Esophagus muscularis mucosa (tissue), 4 donors: ENCODE measurements at regions of chr1 and their contacts with region 1.

Region 1: GRCh38 chr1:237386362-237387143 is 344.6 kb downstream of the RYR2 start:
- DNase-seq: no peak
- H3K4me3 ChIP-seq: no peak overlapping the region
- H3K27ac ChIP-seq: peak overlapping the region in 1 of 4 donors; percentile 1
- H3K4me1 ChIP-seq: peaks cover 8 to 23% (median 19%) of the 10 kb centered on the region in 4 donors
- H3K27me3 ChIP-seq: no peaks in the 10 kb centered on the region
- CTCF ChIP-seq: peak; percentile 75 to 77 (median 76)
- EP300 ChIP-seq: no peak
- POLR2A ChIP-seq: no peak

Region 2: GRCh38 chr1:237041795-237042525 is 344.6 kb before region 1 on chr1 and contains the start of gene RYR2:
- intact Hi-C with region 1: loop called (anchors 10 kb)
- DNase-seq: no peak
- H3K4me3 ChIP-seq: peak within 1 kb of the TSS; percentile 79 to 82 (median 80)
- H3K27ac ChIP-seq: peak within 1 kb of the TSS; percentile 85 to 93 (median 88)
- H3K4me1 ChIP-seq: peaks cover 0 to 54% (median 45%) of the 10 kb centered on the region in 4 donors
- H3K27me3 ChIP-seq: peaks cover 0 to 18% (median 0%) of the 10 kb centered on the region in 4 donors
- CTCF ChIP-seq: peak; percentile 68 to 90 (median 75)
- EP300 ChIP-seq: no peak
- POLR2A ChIP-seq: no peak
- total RNA-seq, gene RYR2: 29.8 to 56.3 (median 38.9) TPM